ENCODE measurements at regions of chr17 and their contacts with region 1.

Region 1: GRCh38 chr17:15999439-16000350 is at the starts of genes TTC19 and ZSWIM7:
- DNase-seq: peak; percentile 99
- H3K4me3 ChIP-seq: peak within 1 kb of the TSS; percentile 64 to 74 (median 68)
- H3K27ac ChIP-seq: peak within 1 kb of the TSS; percentile 89 to 97 (median 96)
- H3K4me1 ChIP-seq: peaks cover 8 to 32% (median 14%) of the 10 kb centered on the region in 4 donors
- H3K27me3 ChIP-seq: no peaks in the 10 kb centered on the region
- CTCF ChIP-seq: peak in 2 of 5 experiments; percentile 4 to 51
- EP300 ChIP-seq: peak; percentile 73
- POLR2A ChIP-seq: peak; percentile 94
- total RNA-seq, gene TTC19: 65.3 to 371 (median 187) TPM
- total RNA-seq, gene ZSWIM7: 3.6 to 19.5 (median 18.6) TPM

Region 2: GRCh38 chr17:15944759-15945529 is 54.8 kb before region 1 on chr17 and contains the start of gene ADORA2B:
- in situ Hi-C with region 1: loop called in 2 of 4 experiments (anchors 10 kb)
- intact Hi-C with region 1: no loop called
- DNase-seq: peak; percentile 76
- H3K4me3 ChIP-seq: peak within 1 kb of the TSS; percentile 35 to 76 (median 60)
- H3K27ac ChIP-seq: peak within 1 kb of the TSS; percentile 87 to 89 (median 89)
- H3K4me1 ChIP-seq: peaks cover 0 to 46% (median 44%) of the 10 kb centered on the region in 4 donors
- H3K27me3 ChIP-seq: peaks cover 10% of the 10 kb centered on the region
- CTCF ChIP-seq: peak in 4 of 5 experiments; percentile 19 to 57 (median 40)
- EP300 ChIP-seq: no peak
- POLR2A ChIP-seq: peak; percentile 47
- total RNA-seq, gene ADORA2B: 41.4 to 68.9 (median 52.0) TPM

Region 3: GRCh38 chr17:15966183-15966878 is 33.4 kb before region 1 on chr17:
- in situ Hi-C with region 1: no loop called
- intact Hi-C with region 1: no loop called
- DNase-seq: peak; percentile 68
- H3K4me3 ChIP-seq: peak overlapping the region in 1 of 4 donors; percentile 6
- H3K27ac ChIP-seq: peak overlapping the region; percentile 82 to 91 (median 85)
- H3K4me1 ChIP-seq: peaks cover 8 to 28% (median 20%) of the 10 kb centered on the region in 4 donors
- H3K27me3 ChIP-seq: no peaks in the 10 kb centered on the region
- CTCF ChIP-seq: no peak
- EP300 ChIP-seq: no peak
- POLR2A ChIP-seq: no peak

Region 4: DNA sequence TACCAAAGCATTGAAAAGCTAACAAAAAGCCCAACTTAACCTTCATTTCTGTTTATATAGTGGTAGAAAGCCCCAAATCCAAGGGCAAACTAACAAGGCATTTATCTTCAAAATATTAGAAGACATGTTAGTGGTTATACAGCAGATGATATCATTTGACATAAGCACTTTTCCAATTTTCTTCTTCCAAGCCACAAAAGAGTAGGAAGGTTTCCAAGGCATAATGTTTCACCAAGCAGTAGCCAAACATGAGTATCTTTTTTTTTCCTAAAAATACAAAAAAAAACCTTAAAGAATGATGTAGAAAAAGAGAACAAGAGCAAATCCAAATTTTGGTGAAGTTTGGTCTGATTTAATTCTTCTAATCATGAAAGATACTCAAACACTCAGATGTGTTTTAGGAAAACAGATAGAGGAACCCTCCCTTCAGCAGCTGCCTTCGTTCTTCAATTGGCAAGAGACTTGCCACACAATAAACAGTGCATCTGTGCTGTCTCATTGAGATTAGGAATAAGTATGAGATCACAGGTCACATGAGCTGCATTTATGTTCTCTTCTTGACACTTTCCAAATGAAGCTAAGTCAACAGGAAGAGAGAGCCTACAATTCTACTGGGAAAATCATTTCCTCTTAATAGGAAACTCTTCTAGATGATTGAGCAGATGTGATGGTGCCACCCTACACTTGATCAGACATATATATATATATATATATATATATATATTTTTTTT is 106.6 kb after region 1 on chr17:
- in situ Hi-C with region 1: loop called in 1 of 4 experiments (anchors 25 kb)
- intact Hi-C with region 1: no loop called
- DNase-seq: no peak
- H3K4me3 ChIP-seq: no peak overlapping the region
- H3K27ac ChIP-seq: peak overlapping the region; percentile 33 to 63 (median 44)
- H3K4me1 ChIP-seq: peaks cover 0 to 8% (median 2%) of the 10 kb centered on the region in 4 donors
- H3K27me3 ChIP-seq: no peaks in the 10 kb centered on the region
- CTCF ChIP-seq: no peak
- EP300 ChIP-seq: no peak
- POLR2A ChIP-seq: no peak

Measured in transverse colon (tissue), 4 donors.